Thyroid gland (tissue), 4 donors: ENCODE measurements at regions of chr1 and their contacts with region 1.

Region 1: DNA sequence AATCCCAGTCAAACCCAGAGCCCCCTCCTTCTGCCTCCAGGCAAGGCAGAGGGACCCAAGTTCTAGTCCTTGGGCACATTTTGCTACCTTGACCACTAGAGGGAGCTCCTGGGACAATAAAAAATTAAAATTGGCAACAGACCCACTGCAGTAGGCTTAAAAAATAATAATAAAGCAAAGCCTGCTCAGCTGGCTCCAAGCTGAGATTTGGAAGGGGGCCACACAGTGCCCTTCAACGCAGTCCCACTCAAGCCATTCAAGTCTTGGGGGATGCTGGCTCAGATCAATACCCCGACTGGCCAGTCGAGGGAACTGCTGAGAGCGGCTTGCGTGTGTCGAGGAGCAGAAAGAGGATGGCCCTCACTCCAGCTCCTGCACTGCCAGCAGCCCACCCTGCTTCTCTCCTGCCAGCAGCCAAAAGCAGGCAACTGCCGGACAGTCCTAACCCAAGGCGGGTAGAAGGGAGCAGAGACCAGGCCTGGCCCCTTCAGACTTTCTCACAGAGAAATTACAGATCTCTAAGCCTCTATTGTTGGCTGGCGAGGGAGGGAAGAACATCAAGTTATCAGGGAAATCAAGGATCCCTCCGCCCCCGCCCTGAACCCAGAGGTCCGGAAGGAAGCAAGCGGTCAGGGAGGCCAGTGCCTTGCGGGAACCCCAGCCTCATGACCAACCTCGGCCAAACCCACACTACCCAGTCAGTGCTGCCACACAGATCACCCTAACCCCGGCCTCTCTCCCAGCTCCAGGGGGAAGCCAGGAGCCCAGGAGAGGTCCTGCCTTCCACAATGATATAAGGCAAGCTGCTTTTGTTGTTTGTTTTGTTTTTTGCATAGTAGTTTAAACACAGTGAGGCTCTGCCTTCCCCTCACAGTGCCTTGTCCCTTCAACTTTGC is 4.9 kb upstream of the ALDH4A1 start:
- DNase-seq: peak; percentile 41 to 48
- H3K4me3 ChIP-seq: no peak overlapping the region
- H3K27ac ChIP-seq: peak overlapping the region in 2 of 3 donors; percentile 52 to 64
- H3K4me1 ChIP-seq: peaks cover 4 to 19% of the 10 kb centered on the region in 2 donors
- H3K27me3 ChIP-seq: no peaks in the 10 kb centered on the region
- CTCF ChIP-seq: peak; percentile 75 to 88 (median 81)
- POLR2A ChIP-seq: no peak

Region 2: DNA sequence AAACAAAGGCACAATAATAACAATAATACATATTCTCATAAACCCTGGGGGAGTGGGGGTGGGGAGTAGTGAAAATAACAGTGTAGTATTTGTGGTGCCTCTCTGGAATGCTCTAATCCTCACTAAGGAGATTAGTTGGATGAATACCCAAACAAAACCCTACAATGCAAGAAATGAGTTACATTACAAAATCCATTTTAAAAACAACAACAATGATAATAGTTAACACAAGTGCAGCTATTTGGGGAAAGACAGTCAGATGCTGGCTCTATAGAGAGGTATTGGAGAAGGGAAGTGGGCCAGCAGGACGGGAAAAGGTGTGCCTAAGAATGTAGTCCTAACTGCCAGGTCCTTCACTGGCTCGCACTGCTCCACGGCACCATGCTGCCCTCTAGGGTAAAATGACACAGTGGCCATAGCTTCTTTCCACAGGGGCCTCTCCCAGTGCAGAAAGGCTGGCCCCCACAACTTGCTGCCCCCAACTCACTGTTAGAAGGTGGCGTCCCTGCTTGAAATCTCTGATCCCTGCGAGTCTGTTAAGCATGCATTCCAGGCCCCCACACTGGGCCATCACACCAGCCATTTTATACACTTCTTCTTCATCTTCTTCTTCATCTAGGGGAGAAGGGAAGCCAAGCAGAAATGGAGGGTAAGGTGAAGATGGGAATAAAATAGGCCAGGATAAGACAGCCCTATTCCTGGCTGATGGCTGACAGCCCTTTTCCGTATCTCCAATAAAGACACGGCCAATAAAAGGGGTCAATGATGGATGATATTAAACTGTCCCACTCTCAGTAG is 189.0 kb after region 1 on chr1:
- intact Hi-C with region 1: loop called (anchors 5 kb)
- DNase-seq: peak; percentile 59 to 61
- H3K4me3 ChIP-seq: no peak overlapping the region
- H3K27ac ChIP-seq: no peak overlapping the region
- H3K4me1 ChIP-seq: peaks cover 0 to 5% of the 10 kb centered on the region in 2 donors
- H3K27me3 ChIP-seq: no peaks in the 10 kb centered on the region
- CTCF ChIP-seq: peak in 5 of 6 experiments; percentile 35 to 71 (median 54)
- POLR2A ChIP-seq: no peak